ENCODE measurements at regions of chr22 and their contacts with region 1.

Region 1: DNA sequence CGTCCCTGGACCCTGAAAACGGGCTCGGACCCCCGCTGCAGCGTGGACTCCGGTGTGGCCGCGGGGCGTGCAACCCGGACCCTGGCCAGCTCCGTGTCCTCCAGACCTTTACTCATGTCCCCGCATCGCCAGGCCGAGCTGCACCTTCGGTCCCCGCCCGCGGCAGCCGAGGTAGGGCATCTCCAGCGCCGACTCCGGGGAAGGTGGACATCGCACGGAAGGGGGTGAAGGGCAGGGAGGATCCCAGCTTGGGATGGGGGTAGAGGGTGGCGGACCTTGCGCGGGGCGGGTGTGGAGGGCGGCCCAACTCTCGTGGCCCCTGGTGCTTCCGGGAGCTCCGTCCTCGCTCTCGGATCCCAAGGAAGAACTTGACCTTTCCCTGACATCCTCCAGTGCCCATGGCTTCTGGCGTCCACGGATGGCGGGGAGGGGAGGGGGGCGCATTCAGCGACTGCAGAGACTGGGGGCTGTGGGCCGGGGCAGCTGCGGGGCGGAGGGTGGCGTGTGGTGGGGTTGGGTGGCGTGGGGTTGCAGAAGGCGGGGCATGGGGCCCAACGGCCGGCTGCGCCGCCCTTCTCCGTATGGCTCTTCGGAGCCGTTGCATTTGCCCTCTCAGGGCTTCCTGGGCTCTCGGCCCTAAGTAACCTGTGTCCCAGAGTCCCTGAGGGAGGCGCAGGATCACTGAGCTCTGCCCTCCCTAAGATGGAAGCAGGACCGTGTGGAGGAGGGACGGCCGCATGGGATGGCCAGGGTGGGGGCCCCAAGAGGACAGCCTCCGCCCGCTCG is 9.5 kb upstream of the AIFM3 start:
- DNase-seq: no peak
- H3K4me3 ChIP-seq: peak overlapping the region; percentile 16 to 55 (median 41)
- H3K27ac ChIP-seq: no peak overlapping the region
- H3K4me1 ChIP-seq: peaks cover 45% of the 10 kb centered on the region
- H3K27me3 ChIP-seq: no peaks in the 10 kb centered on the region
- CTCF ChIP-seq: no peak

Region 2: GRCh38 chr22:20867179-20868024 is 90.1 kb before region 1 on chr22:
- CTCF ChIA-PET with region 1: no interaction called
- dilution Hi-C with region 1: loop called (anchors 5 kb)
- in situ Hi-C with region 1: no loop called
- intact Hi-C with region 1: no loop called
- DNase-seq: no peak
- H3K4me3 ChIP-seq: no peak overlapping the region
- H3K27ac ChIP-seq: no peak overlapping the region
- H3K4me1 ChIP-seq: peaks cover 4% of the 10 kb centered on the region
- H3K27me3 ChIP-seq: no peaks in the 10 kb centered on the region
- CTCF ChIP-seq: no peak

Region 3: DNA sequence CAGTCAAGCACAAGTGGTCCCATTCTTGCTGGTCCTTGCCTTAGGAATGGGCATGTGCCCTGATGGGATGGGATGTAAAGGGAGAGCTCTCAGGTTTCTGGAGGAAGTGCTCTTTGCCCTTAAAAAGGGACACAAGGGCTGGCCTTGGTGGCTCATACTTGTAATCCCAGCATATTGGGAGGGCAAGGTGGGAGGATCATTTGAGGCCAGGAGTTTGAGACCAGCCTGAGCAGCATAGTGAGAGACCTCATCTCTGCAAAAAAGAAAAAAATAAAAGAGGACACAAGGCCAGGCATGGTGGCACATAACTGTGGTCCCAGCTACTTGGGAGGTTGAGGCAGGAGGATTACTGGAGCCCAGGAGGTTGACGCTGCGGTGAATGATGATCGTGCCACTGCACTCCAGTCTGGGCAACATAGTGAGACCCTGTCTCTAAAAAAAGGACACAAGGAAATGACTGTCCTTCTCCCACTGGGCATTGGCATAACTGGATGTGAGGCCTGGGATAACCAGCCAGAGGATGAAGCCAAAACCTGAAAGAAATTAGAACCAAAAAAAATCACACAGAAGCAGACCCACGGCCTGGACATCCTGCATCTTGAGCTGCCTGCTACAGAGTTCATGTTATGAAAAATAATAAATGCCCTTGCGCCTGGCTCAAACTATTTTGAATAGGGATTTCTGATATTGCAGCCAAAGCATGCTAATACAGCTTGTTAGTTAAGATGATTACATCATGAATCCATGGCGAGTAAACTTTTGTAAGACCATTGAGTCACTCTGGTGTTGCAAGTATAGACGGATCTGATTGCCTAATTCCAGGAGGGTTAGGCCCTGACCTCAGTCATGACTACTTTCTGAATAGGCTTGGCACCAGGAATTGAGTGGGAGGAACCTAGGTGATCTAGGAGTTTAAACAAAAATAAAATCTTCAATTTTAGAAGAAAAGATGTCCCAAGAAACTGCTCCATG is 53.2 kb before region 1 on chr22:
- CTCF ChIA-PET with region 1: no interaction called
- dilution Hi-C with region 1: no loop called
- in situ Hi-C with region 1: loop called in 1 of 2 experiments (anchors 10 kb)
- intact Hi-C with region 1: loop called (anchors 5 kb)
- DNase-seq: peak; percentile 98
- H3K4me3 ChIP-seq: peak overlapping the region in 1 of 3 experiments; percentile 27
- H3K27ac ChIP-seq: peak overlapping the region; percentile 94
- H3K4me1 ChIP-seq: peaks cover 23% of the 10 kb centered on the region
- H3K27me3 ChIP-seq: no peaks in the 10 kb centered on the region
- CTCF ChIP-seq: no peak

Region 4: DNA sequence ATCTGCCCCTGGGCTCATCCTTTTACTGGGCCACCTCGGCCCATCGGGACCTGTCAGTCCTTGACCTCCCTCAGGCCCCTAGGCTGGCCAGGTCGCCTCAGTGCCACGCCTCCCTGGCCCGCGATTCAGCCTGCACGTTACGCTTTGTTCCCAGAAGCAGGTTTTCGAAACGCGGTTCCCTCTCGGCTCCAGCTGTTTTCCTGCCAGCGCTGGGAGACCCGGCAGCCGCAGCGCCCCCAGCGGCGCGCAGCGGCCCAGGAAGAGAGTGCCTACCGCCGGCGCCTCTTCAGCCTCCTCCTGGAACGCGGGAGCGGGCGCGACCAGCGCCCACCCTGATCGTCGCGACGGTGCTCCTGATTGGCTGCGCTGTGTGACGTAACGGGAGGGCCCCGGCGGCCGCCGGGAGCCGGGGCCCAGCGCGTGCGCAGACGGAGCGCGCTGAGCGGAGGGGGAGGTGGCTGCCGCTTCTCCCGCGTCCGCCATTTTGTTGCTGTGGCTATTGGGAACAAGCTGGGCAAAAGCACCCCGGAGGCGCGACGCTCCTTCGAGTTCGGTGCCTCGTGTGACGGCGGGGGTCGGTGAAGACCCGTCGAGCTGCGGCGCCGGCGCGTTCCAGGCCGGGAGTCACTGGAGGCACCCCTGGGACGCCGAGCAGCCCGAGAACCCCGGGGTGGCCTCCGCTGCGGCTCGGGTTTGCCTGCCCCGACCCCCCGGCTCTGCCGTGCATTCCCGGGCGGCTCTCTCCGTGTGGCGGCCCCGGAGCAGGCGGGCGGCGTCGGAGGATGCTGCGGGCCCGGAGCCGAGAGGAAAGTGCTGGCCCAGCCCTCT is 40.3 kb before region 1 on chr22 and contains the start of gene CRKL:
- CTCF ChIA-PET with region 1: interaction called, 5 read pairs
- dilution Hi-C with region 1: no loop called
- in situ Hi-C with region 1: no loop called
- intact Hi-C with region 1: loop called (anchors 2 kb)
- DNase-seq: peak; percentile 98
- H3K4me3 ChIP-seq: peak within 1 kb of the TSS; percentile 90 to 98 (median 92)
- H3K27ac ChIP-seq: peak within 1 kb of the TSS; percentile 82
- H3K4me1 ChIP-seq: peaks cover 19% of the 10 kb centered on the region
- H3K27me3 ChIP-seq: no peaks in the 10 kb centered on the region
- CTCF ChIP-seq: peak; percentile 78 to 95
- total RNA-seq, gene CRKL: 75.0 to 80.3 TPM

Region 5: GRCh38 chr22:20972933-20973577 is 15.5 kb after region 1 on chr22:
- CTCF ChIA-PET with region 1: interaction called, 23 read pairs
- dilution Hi-C with region 1: no loop called
- in situ Hi-C with region 1: no loop called
- intact Hi-C with region 1: no loop called
- DNase-seq: no peak
- H3K4me3 ChIP-seq: no peak overlapping the region
- H3K27ac ChIP-seq: no peak overlapping the region
- H3K4me1 ChIP-seq: no peaks in the 10 kb centered on the region
- H3K27me3 ChIP-seq: no peaks in the 10 kb centered on the region
- CTCF ChIP-seq: no peak

Measured in mammary epithelial cell (primary cell).